ENCODE measurements at regions of chr19 and their contacts with region 1.

Region 1: DNA sequence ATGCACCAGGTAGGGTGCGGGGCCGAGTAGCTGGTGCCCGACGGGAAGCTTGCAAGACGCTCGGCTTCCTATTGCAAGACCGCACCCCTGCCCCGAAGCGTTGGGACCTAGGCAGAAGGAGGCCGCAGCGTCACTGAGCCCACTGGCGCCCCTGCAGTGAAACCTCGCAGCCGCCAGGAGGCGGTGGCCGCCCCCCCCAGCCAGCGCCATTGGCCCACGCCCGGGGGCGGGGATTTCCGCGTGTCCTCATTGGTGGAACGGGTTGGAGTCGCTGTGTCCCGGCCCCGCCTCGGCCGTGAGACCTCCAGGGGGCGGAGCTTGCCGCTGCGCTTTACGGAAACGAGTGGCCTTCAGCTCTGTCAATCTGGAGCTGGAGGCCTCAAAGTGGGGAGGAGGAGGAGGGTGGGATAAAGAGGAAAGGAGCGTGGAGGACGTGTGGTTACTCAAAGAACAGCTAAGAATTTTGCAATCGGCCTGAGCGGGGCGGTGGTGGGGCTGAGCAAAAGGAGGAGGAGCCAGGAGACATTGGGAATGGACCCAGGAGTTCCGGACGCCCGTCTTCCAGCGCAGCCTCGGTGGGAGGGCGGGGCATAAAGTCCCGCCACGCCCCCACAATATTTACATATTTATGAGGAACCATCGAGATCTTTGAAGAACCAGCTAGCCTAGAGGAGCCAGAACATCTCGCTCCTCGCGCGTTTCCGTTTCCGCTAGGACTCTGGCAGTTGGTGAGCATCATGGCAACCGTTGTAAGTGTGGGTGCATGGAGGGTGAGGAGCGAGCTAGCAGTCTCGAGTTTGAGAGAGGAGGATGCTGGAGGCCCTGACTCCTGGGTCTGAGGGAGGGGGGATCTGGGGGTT is at the starts of genes GYS1 and RUVBL2:
- DNase-seq: peak; percentile 99
- H3K4me3 Mint-ChIP-seq: peak within 1 kb of the TSS; percentile 94
- H3K27ac Mint-ChIP-seq: peak within 1 kb of the TSS; percentile 96
- H3K4me1 Mint-ChIP-seq: peaks cover 38% of the 10 kb centered on the region
- H3K27me3 Mint-ChIP-seq: no peaks in the 10 kb centered on the region
- total RNA-seq, gene GYS1: 71.2 and 77.1 TPM in 2 replicates
- total RNA-seq, gene RUVBL2: 172 and 175 TPM in 2 replicates

Region 2: GRCh38 chr19:48637170-48637947 is 356.0 kb before region 1 on chr19 and contains the start of gene DBP:
- intact Hi-C with region 1: loop called (anchors 2 kb)
- DNase-seq: peak; percentile 98
- H3K4me3 Mint-ChIP-seq: peak within 1 kb of the TSS; percentile 97
- H3K27ac Mint-ChIP-seq: peak within 1 kb of the TSS; percentile 100
- H3K4me1 Mint-ChIP-seq: peaks cover 29% of the 10 kb centered on the region
- H3K27me3 Mint-ChIP-seq: peaks cover 4% of the 10 kb centered on the region
- total RNA-seq, gene DBP: 8.5 and 9.1 TPM in 2 replicates

Region 3: GRCh38 chr19:48812094-48812929 is 181.1 kb before region 1 on chr19:
- intact Hi-C with region 1: loop called (anchors 1 kb)
- DNase-seq: peak; percentile 58
- H3K4me3 Mint-ChIP-seq: peak overlapping the region; percentile 76
- H3K27ac Mint-ChIP-seq: no peak overlapping the region
- H3K4me1 Mint-ChIP-seq: peaks cover 33% of the 10 kb centered on the region
- H3K27me3 Mint-ChIP-seq: peaks cover 2% of the 10 kb centered on the region

Region 4: DNA sequence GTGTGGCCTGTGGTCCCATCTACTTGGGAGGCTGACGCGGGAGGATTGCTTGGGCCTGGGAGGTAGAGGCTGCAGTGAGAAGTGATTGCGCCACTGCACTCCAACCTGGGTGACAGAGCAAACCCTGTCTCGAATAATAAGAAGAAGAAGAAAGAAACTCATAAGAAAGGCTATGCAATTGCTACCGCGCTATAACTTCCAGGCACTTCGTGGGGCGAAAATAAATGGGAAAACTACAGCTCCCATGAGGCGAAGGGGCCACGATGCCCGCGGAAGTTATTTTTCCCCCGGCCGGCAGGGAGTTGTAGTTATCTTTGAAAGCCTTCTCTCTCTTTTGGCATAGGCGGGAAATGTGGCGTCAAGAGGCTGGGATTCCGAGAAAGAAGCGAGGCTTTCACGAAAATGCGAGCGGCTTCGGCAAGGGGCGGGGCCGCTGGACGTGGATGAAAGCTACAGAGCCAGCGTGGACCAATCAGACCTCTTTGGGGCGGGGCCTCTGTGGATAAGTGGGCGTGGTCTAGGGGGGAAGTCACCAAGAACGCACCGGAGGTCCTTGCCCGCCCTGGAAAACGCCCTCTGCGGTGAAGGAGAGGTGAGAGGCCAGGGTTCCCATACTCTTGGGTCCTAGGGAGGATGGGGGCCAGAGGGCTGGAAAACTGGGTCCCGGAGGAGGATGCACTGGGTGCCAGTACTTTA is 93.5 kb before region 1 on chr19 and contains the start of gene NUCB1:
- intact Hi-C with region 1: loop called (anchors 1 kb)
- DNase-seq: peak; percentile 99
- H3K4me3 Mint-ChIP-seq: peak within 1 kb of the TSS; percentile 93
- H3K27ac Mint-ChIP-seq: peak within 1 kb of the TSS; percentile 96
- H3K4me1 Mint-ChIP-seq: peaks cover 32% of the 10 kb centered on the region
- H3K27me3 Mint-ChIP-seq: peaks cover 5% of the 10 kb centered on the region
- total RNA-seq, gene NUCB1: 117 and 122 TPM in 2 replicates

Region 5: GRCh38 chr19:49017666-49018351 is 24.4 kb after region 1 on chr19:
- intact Hi-C with region 1: loop called (anchors 1 kb)
- DNase-seq: peak; percentile 49
- H3K4me3 Mint-ChIP-seq: peak overlapping the region; percentile 84
- H3K27ac Mint-ChIP-seq: no peak overlapping the region
- H3K4me1 Mint-ChIP-seq: peaks cover 20% of the 10 kb centered on the region
- H3K27me3 Mint-ChIP-seq: peaks cover 20% of the 10 kb centered on the region

Region 6: DNA sequence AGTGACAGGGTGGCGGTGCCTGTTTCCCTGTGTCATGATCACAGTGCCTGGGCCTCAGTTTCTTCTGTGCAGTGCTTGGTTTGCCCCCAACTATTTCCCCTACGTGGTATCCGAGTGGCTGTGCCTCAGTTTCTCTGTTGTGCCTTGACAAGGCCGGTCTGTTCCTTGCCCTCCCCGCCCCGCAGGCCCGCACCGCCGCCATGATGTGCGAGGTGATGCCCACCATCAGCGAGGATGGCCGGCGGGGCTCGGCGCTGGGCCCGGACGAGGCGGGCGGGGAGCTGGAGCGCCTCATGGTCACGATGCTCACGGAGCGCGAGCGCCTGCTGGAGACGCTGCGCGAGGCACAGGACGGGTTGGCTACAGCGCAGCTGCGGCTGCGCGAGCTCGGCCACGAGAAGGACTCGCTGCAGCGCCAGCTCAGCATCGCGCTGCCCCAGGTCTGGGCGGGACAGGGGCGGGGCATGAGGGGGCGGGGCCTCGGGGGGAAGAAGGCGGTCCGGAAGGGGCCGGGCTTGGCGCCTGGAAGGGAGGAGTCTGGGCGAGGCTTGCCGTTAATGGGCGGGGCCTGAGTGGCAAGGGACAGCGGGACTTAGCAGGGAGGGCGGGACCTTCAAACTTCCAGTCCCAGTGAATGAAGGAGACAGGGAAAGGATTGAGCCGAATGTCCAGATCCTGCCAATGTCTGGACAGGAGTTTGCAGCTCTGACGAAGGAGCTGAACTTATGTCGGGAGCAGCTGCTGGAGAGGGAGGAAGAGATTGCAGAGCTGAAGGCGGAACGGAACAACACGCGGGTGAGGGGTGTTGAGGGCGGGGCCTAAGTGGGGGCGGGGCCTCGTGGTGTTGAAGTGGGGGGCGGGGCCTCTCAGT is 134.5 kb after region 1 on chr19:
- intact Hi-C with region 1: loop called (anchors 1 kb)
- DNase-seq: peak; percentile 91
- H3K4me3 Mint-ChIP-seq: peak overlapping the region; percentile 88
- H3K27ac Mint-ChIP-seq: peak overlapping the region; percentile 81
- H3K4me1 Mint-ChIP-seq: peaks cover 17% of the 10 kb centered on the region
- H3K27me3 Mint-ChIP-seq: peaks cover 6% of the 10 kb centered on the region

Measured in activated T-helper 1 cell treated with anti-CD3 and anti-CD28 coated beads, Interleukin-12 subunit alpha, Interleukin-12 subunit beta, Interleukin-2, Interleukin-4 antibody, amounts not matched to agents 30 ng/mL and 10 ng/mL and 1 ng/mL, durations not matched to agents 14 hours and 24 hours and 36 hours (primary cell).